ENCODE measurements at regions of chr20 and their contacts with region 1.

Region 1: GRCh38 chr20:18678549-18679419 is 90.9 kb downstream of the DTD1 start:
- DNase-seq: peak; percentile 4
- H3K4me3 ChIP-seq: no peak overlapping the region
- H3K27ac ChIP-seq: no peak overlapping the region
- H3K4me1 ChIP-seq: no peaks in the 10 kb centered on the region
- H3K27me3 ChIP-seq: no peaks in the 10 kb centered on the region

Region 2: DNA sequence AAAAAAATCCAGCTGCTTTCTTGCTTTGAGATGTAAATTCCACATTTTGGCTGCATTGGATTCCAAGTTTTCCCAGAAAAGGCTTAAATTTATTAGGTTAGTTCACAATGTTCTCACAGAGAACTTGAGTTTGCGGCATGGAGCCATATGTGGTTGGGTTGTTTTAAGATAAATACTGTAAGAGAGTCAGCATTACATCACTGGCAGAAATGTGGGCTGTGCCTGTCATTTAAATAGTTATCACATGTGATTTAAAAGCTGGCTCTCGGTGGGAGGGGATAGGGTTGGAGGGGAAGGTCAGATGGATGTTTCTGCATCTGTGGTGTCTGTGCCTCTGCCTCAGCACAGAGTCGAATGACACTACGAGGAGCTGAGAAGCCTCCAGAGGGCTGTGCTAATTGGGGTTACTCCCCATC is 61.0 kb after region 1 on chr20:
- in situ Hi-C with region 1: loop called (anchors 10 kb)
- DNase-seq: peak; percentile 53
- H3K4me3 ChIP-seq: 0 out of 2 replicates have a peak overlapping the region, but pooled peaks have one; percentile 6
- H3K27ac ChIP-seq: peak overlapping the region; percentile 33
- H3K4me1 ChIP-seq: no peaks in the 10 kb centered on the region; the same call in 1 of the 2 replicates
- H3K27me3 ChIP-seq: no peaks in the 10 kb centered on the region